Transverse colon (tissue), 4 donors: ENCODE measurements at regions of chr2 and their contacts with region 1.

Region 1: GRCh38 chr2:139652385-139652784 is 872.2 kb upstream of the NXPH2 start:
- DNase-seq: no peak
- H3K4me3 ChIP-seq: no peak overlapping the region
- H3K27ac ChIP-seq: no peak overlapping the region
- H3K4me1 ChIP-seq: no peaks in the 10 kb centered on the region
- H3K27me3 ChIP-seq: no peaks in the 10 kb centered on the region
- CTCF ChIP-seq: no peak
- EP300 ChIP-seq: no peak
- POLR2A ChIP-seq: no peak

Region 2: DNA sequence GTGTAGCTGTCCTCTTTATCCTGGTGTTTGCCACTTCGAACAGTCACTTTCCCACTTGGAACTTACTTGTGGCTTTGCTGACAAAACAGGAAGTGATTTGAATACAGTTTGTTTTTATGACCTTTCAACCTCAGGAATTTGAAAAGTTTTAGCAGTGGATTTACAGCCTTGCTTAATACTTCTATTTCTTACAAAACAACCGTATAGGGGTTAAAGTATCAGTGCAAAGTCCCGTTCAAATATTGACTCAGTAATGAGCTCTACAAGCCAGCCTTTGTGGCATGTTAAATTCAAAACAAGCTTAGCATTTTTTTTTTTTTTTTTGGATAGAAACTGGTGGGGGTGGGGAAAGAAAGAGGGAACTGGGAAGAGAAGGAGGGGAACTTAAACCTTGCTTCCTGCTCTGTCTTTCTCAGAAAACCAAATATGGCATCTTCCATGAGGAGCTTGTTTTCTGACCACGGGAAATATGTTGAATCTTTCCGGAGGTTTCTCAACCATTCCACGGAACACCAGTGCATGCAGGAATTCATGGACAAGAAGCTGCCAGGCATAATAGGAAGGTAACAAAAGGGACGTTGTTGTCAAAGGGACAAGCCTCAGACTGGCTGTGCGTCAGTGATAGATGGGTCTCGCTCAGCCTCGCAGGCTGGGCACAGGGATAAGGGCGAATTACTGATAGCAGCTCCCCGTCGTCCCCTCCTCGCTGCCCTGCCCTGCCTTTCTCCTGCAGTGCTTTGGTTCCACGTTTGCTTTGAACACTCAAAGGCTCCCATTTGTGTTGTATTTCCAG is 1688.1 kb before region 1 on chr2 and contains the start of gene HNMT:
- in situ Hi-C with region 1: no loop called
- intact Hi-C with region 1: loop called (anchors 10 kb)
- DNase-seq: peak; percentile 64
- H3K4me3 ChIP-seq: peak within 1 kb of the TSS; percentile 16 to 65 (median 44)
- H3K27ac ChIP-seq: peak within 1 kb of the TSS; percentile 89 to 91 (median 90)
- H3K4me1 ChIP-seq: peaks cover 5 to 56% (median 24%) of the 10 kb centered on the region in 4 donors
- H3K27me3 ChIP-seq: no peaks in the 10 kb centered on the region
- CTCF ChIP-seq: no peak
- EP300 ChIP-seq: no peak
- POLR2A ChIP-seq: peak; percentile 46
- total RNA-seq, gene HNMT: 36.3 to 64.9 (median 48.4) TPM

Region 3: DNA sequence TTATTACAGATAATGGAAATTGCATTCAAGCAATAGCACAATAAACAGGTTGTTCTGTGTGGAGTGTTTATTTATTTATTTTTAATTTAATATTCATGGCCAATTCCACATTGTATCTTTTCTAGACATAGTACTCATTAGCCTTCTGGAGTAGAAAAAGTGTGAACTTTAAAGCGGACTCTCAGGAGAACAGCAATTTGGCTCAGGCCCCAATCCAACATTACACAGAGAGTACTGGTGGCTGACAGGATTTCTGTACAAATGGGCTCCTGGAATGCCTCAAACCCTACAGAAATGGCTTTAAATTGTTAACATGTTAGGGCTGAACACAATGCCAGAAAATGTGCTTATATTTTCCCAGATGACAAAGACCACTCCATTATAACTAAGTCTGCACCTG is 338.3 kb before region 1 on chr2:
- in situ Hi-C with region 1: no loop called
- intact Hi-C with region 1: no loop called
- DNase-seq: no peak
- H3K4me3 ChIP-seq: no peak overlapping the region
- H3K27ac ChIP-seq: no peak overlapping the region
- H3K4me1 ChIP-seq: no peaks in the 10 kb centered on the region
- H3K27me3 ChIP-seq: no peaks in the 10 kb centered on the region
- CTCF ChIP-seq: no peak
- EP300 ChIP-seq: no peak
- POLR2A ChIP-seq: no peak